Psoas muscle (tissue), 8 donors: ENCODE measurements at regions of chr11 and their contacts with region 1.

Region 1: GRCh38 chr11:117426269-117426685 is 98.6 kb downstream of the CEP164 start:
- DNase-seq: peak; percentile 62 to 79
- ATAC-seq: peak; percentile 49 to 71 (median 59)
- H3K4me3 ChIP-seq: no peak overlapping the region
- H3K27ac ChIP-seq: no peak overlapping the region
- H3K4me1 ChIP-seq: no peaks in the 10 kb centered on the region
- H3K27me3 ChIP-seq: peaks cover 0 to 4% (median 2%) of the 10 kb centered on the region in 3 donors
- CTCF ChIP-seq: peak; percentile 89

Region 2: GRCh38 chr11:117817368-117818040 is 391.2 kb after region 1 on chr11:
- intact Hi-C with region 1: loop called in 1 of 2 experiments (anchors 2 kb)
- DNase-seq: peak; percentile 83 to 88
- ATAC-seq: peak; percentile 59 to 83 (median 68)
- H3K4me3 ChIP-seq: no peak overlapping the region
- H3K27ac ChIP-seq: no peak overlapping the region
- H3K4me1 ChIP-seq: no peaks in the 10 kb centered on the region
- H3K27me3 ChIP-seq: no peaks in the 10 kb centered on the region
- CTCF ChIP-seq: peak; percentile 99